ENCODE measurements at regions of chr1 and their contacts with region 1.

Region 1: GRCh38 chr1:158248118-158248517 is 6.1 kb upstream of the CD1A start:
- DNase-seq: peak; percentile 88
- ATAC-seq: peak; percentile 84
- H3K4me3 ChIP-seq: peak overlapping the region in 3 of 5 experiments; percentile 16 to 32 (median 26)
- H3K4me3 Mint-ChIP-seq: peak overlapping the region; percentile 49
- H3K27ac ChIP-seq: peak overlapping the region; percentile 40 to 63
- H3K27ac Mint-ChIP-seq: peak overlapping the region; percentile 57
- H3K4me1 ChIP-seq: peaks cover 49 to 51% of the 10 kb centered on the region in 2 donors
- H3K4me1 Mint-ChIP-seq: peaks cover 48% of the 10 kb centered on the region
- H3K27me3 ChIP-seq: no peaks in the 10 kb centered on the region
- H3K27me3 Mint-ChIP-seq: no peaks in the 10 kb centered on the region
- CTCF ChIP-seq: no peak

Region 2: DNA sequence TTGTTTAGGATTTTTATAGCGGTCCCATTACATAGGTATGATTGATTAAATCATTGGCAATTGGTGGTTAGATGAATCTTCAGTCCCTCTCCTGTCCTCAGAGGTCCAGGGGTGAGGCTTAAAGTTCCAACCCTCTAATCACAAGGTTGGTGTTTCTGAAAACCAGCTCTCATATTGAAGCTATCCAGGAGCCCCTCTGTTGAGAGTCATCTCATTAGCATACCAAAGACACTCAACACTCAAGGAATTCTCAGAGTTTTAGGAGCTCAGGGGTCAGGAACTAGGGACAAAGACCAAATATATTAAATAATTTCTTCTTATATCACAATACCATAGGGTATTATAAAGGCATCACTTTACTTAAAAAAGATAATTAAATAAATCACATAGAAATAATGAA is 494.5 kb before region 1 on chr1:
- CTCF ChIA-PET with region 1: no interaction called
- POLR2A ChIA-PET with region 1: no interaction called
- intact Hi-C with region 1: no loop called
- DNase-seq: no peak
- ATAC-seq: no peak
- H3K4me3 ChIP-seq: no peak overlapping the region
- H3K4me3 Mint-ChIP-seq: no peak overlapping the region
- H3K27ac ChIP-seq: no peak overlapping the region
- H3K27ac Mint-ChIP-seq: no peak overlapping the region
- H3K4me1 ChIP-seq: peaks cover 8 to 11% of the 10 kb centered on the region in 2 donors
- H3K4me1 Mint-ChIP-seq: peaks cover 32% of the 10 kb centered on the region
- H3K27me3 ChIP-seq: no peaks in the 10 kb centered on the region
- H3K27me3 Mint-ChIP-seq: no peaks in the 10 kb centered on the region
- CTCF ChIP-seq: no peak

Region 3: GRCh38 chr1:158285756-158286241 is 37.7 kb after region 1 on chr1:
- CTCF ChIA-PET with region 1: interaction called, 17 read pairs
- POLR2A ChIA-PET with region 1: interaction called, 5 read pairs
- intact Hi-C with region 1: loop called (anchors 1 kb)
- DNase-seq: peak; percentile 91
- ATAC-seq: peak; percentile 77
- H3K4me3 ChIP-seq: peak overlapping the region; percentile 3 to 59 (median 30)
- H3K4me3 Mint-ChIP-seq: peak overlapping the region; percentile 86
- H3K27ac ChIP-seq: peak overlapping the region; percentile 75 to 79
- H3K27ac Mint-ChIP-seq: peak overlapping the region; percentile 94
- H3K4me1 ChIP-seq: peaks cover 80 to 93% of the 10 kb centered on the region in 2 donors
- H3K4me1 Mint-ChIP-seq: peaks cover 72% of the 10 kb centered on the region
- H3K27me3 ChIP-seq: no peaks in the 10 kb centered on the region
- H3K27me3 Mint-ChIP-seq: no peaks in the 10 kb centered on the region
- CTCF ChIP-seq: no peak

Region 4: GRCh38 chr1:158324395-158324794 is 76.3 kb after region 1 on chr1:
- CTCF ChIA-PET with region 1: interaction called, 92 read pairs
- POLR2A ChIA-PET with region 1: no interaction called
- intact Hi-C with region 1: loop called (anchors 1 kb)
- DNase-seq: no peak
- ATAC-seq: no peak
- H3K4me3 ChIP-seq: peak overlapping the region in 1 of 5 experiments; percentile 23
- H3K4me3 Mint-ChIP-seq: peak overlapping the region; percentile 60
- H3K27ac ChIP-seq: no peak overlapping the region
- H3K27ac Mint-ChIP-seq: no peak overlapping the region
- H3K4me1 ChIP-seq: peaks cover 10 to 13% of the 10 kb centered on the region in 2 donors
- H3K4me1 Mint-ChIP-seq: peaks cover 17% of the 10 kb centered on the region
- H3K27me3 ChIP-seq: no peaks in the 10 kb centered on the region
- H3K27me3 Mint-ChIP-seq: no peaks in the 10 kb centered on the region
- CTCF ChIP-seq: no peak

Region 5: DNA sequence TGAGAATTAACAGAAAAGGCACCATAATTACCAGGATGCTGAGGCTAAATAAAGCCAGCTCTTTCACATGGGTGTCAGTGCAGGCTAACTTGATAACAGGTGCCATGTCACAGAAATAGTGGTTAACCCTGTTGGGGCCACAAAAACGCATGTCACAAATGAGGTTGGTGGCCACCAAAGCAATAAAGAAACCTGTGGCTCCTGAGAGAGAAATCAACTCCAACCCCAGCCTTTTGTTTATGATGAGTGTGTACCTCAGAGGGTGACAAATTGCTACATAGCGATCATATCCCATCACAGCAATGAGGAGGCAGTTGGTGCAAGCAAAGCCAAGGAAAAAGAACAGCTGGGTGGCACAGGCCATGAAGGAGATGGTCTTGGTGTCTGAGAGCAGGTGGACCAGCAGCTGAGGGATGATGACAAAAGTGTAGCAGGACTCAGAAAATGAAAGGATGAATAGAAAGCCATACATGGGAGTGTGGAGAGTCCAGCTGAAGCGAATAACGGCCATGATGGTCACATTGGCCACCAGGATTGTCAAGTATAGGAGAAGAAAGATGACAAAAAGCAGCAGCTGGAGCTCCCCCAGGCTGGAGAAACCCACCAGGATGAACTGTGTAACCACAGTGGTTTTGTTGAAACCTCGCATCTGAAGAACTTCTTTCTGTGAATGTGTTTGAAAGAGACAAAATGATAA is 150.8 kb after region 1 on chr1 and contains the start of gene OR10T2:
- CTCF ChIA-PET with region 1: no interaction called
- POLR2A ChIA-PET with region 1: no interaction called
- intact Hi-C with region 1: loop called (anchors 10 kb)
- DNase-seq: no peak
- ATAC-seq: no peak
- H3K4me3 ChIP-seq: no peak within 1 kb of the TSS
- H3K4me3 Mint-ChIP-seq: no peak within 1 kb of the TSS
- H3K27ac ChIP-seq: no peak within 1 kb of the TSS
- H3K27ac Mint-ChIP-seq: no peak within 1 kb of the TSS
- H3K4me1 ChIP-seq: peaks cover 2 to 12% of the 10 kb centered on the region in 2 donors
- H3K4me1 Mint-ChIP-seq: peaks cover 12% of the 10 kb centered on the region
- H3K27me3 ChIP-seq: no peaks in the 10 kb centered on the region
- H3K27me3 Mint-ChIP-seq: no peaks in the 10 kb centered on the region
- CTCF ChIP-seq: no peak
- total RNA-seq, gene OR10T2: not detected in 2 replicates

Region 6: GRCh38 chr1:158496374-158496773 is 248.3 kb after region 1 on chr1:
- CTCF ChIA-PET with region 1: interaction called, 22 read pairs
- POLR2A ChIA-PET with region 1: no interaction called
- intact Hi-C with region 1: loop called (anchors 1 kb)
- DNase-seq: peak; percentile 46
- ATAC-seq: no peak
- H3K4me3 ChIP-seq: no peak overlapping the region
- H3K4me3 Mint-ChIP-seq: no peak overlapping the region
- H3K27ac ChIP-seq: no peak overlapping the region
- H3K27ac Mint-ChIP-seq: no peak overlapping the region
- H3K4me1 ChIP-seq: no peaks in the 10 kb centered on the region
- H3K4me1 Mint-ChIP-seq: peaks cover 2% of the 10 kb centered on the region
- H3K27me3 ChIP-seq: peaks cover 0 to 5% (median 0%) of the 10 kb centered on the region in 4 experiments
- H3K27me3 Mint-ChIP-seq: peaks cover 11% of the 10 kb centered on the region
- CTCF ChIP-seq: peak; percentile 35

Measured in B cell (primary cell).